ENCODE measurements at regions of chr5 and their contacts with region 1.

Region 1: DNA sequence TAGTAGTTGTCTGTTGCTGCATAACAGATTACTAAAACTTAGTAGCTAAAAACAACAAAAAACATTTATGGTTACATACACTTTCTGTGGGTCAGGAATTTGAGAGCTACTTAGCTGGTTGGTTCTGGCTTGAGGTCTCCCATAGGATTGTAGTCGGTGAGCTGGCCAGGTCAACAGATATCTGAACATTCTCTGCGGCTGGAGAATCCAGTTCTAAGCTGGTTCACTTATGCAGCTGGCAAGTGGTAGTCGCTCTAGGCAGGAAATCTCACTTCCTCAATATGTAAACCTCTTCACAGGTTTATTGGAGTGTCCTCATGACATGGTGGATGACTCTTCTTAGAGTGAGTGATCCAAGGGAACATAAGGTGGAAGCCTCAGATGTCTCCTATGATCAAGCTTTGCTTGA is 65.7 kb upstream of the TNFAIP8 start:
- DNase-seq: peak; percentile 26
- ATAC-seq: peak; percentile 59
- H3K4me3 Mint-ChIP-seq: peak overlapping the region; percentile 22
- H3K27ac Mint-ChIP-seq: peak overlapping the region; percentile 93
- H3K4me1 Mint-ChIP-seq: peaks cover 85% of the 10 kb centered on the region
- H3K27me3 Mint-ChIP-seq: no peaks in the 10 kb centered on the region
- CTCF ChIP-seq: no peak

Region 2: DNA sequence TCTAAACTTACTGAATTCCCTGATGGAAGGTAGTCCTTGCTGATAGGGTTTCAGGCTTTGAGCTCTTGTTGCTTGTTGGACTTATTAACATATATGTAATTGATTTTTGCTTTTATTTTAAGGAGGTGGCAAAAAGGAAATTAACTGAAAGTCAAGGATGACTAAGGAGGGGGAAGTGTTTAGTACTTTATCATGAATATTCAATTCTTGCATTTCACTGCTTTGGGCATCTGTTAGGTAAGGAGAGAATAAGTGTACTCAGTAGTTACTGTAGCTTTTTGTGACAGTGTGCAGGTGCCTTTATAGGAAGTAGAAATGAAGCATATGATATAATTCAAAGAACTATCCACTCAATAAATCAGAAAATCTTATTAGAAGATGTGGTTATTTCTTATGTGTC is 172.2 kb before region 1 on chr5:
- CTCF ChIA-PET with region 1: no interaction called
- POLR2A ChIA-PET with region 1: no interaction called
- intact Hi-C with region 1: no loop called
- DNase-seq: no peak
- ATAC-seq: no peak
- H3K4me3 Mint-ChIP-seq: no peak overlapping the region
- H3K27ac Mint-ChIP-seq: no peak overlapping the region
- H3K4me1 Mint-ChIP-seq: peaks cover 2% of the 10 kb centered on the region
- H3K27me3 Mint-ChIP-seq: no peaks in the 10 kb centered on the region
- CTCF ChIP-seq: no peak

Region 3: DNA sequence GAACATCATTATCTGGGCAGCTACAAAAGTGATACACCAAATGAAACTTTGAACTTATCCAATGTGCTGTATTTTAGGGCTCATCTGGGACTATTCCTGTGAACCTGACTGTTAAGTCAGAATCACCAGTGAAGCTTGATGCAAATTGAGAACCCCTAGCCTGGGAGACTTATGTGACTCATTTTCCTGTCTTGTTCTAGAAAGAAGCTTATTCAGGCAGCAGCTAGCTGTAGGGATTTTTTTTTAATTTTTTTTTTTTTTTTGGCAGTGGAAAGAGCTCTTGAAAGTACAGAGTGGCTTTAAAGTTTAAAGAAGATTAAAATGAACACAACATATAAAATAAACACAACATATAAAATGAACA is 15.4 kb before region 1 on chr5:
- CTCF ChIA-PET with region 1: interaction called, 13 read pairs
- POLR2A ChIA-PET with region 1: interaction called, 13 read pairs
- intact Hi-C with region 1: no loop called
- DNase-seq: no peak
- ATAC-seq: peak; percentile 67
- H3K4me3 Mint-ChIP-seq: peak overlapping the region; percentile 95
- H3K27ac Mint-ChIP-seq: peak overlapping the region; percentile 92
- H3K4me1 Mint-ChIP-seq: peaks cover 87% of the 10 kb centered on the region
- H3K27me3 Mint-ChIP-seq: no peaks in the 10 kb centered on the region
- CTCF ChIP-seq: no peak

Region 4: GRCh38 chr5:119302916-119303897 is 13.0 kb after region 1 on chr5:
- CTCF ChIA-PET with region 1: interaction called, 12 read pairs
- POLR2A ChIA-PET with region 1: interaction called, 15 read pairs
- intact Hi-C with region 1: no loop called
- DNase-seq: no peak
- ATAC-seq: peak; percentile 46
- H3K4me3 Mint-ChIP-seq: no peak overlapping the region
- H3K27ac Mint-ChIP-seq: peak overlapping the region; percentile 88
- H3K4me1 Mint-ChIP-seq: peaks cover 91% of the 10 kb centered on the region
- H3K27me3 Mint-ChIP-seq: no peaks in the 10 kb centered on the region
- CTCF ChIP-seq: no peak

Region 5: GRCh38 chr5:119309326-119309725 is 19.2 kb after region 1 on chr5:
- CTCF ChIA-PET with region 1: interaction called, 5 read pairs
- POLR2A ChIA-PET with region 1: interaction called, 11 read pairs
- intact Hi-C with region 1: no loop called
- DNase-seq: peak; percentile 27
- ATAC-seq: peak; percentile 4
- H3K4me3 Mint-ChIP-seq: peak overlapping the region; percentile 76
- H3K27ac Mint-ChIP-seq: peak overlapping the region; percentile 98
- H3K4me1 Mint-ChIP-seq: peaks cover 94% of the 10 kb centered on the region
- H3K27me3 Mint-ChIP-seq: no peaks in the 10 kb centered on the region
- CTCF ChIP-seq: no peak

Region 6: GRCh38 chr5:119315516-119315949 is 25.4 kb after region 1 on chr5:
- CTCF ChIA-PET with region 1: interaction called, 14 read pairs
- POLR2A ChIA-PET with region 1: interaction called, 8 read pairs
- intact Hi-C with region 1: no loop called
- DNase-seq: peak; percentile 84
- ATAC-seq: peak; percentile 79
- H3K4me3 Mint-ChIP-seq: peak overlapping the region; percentile 38
- H3K27ac Mint-ChIP-seq: peak overlapping the region; percentile 81
- H3K4me1 Mint-ChIP-seq: peaks cover 93% of the 10 kb centered on the region
- H3K27me3 Mint-ChIP-seq: no peaks in the 10 kb centered on the region
- CTCF ChIP-seq: peak; percentile 70

Measured in activated CD8-positive, alpha-beta T cell treated with anti-CD3 and anti-CD28 coated beads for 36 hours (primary cell).